B cell (primary cell): ENCODE measurements at regions of chr15 and their contacts with region 1.

Region 1: GRCh38 chr15:38690689-38691332 is 126.2 kb upstream of the RASGRP1 start:
- DNase-seq: peak; percentile 82
- ATAC-seq: peak; percentile 86
- H3K4me3 ChIP-seq: no peak overlapping the region
- H3K4me3 Mint-ChIP-seq: no peak overlapping the region
- H3K27ac ChIP-seq: no peak overlapping the region
- H3K27ac Mint-ChIP-seq: no peak overlapping the region
- H3K4me1 ChIP-seq: peaks cover 0 to 3% of the 10 kb centered on the region in 2 donors
- H3K4me1 Mint-ChIP-seq: peaks cover 12% of the 10 kb centered on the region
- H3K27me3 ChIP-seq: no peaks in the 10 kb centered on the region
- H3K27me3 Mint-ChIP-seq: no peaks in the 10 kb centered on the region
- CTCF ChIP-seq: peak; percentile 94

Region 2: DNA sequence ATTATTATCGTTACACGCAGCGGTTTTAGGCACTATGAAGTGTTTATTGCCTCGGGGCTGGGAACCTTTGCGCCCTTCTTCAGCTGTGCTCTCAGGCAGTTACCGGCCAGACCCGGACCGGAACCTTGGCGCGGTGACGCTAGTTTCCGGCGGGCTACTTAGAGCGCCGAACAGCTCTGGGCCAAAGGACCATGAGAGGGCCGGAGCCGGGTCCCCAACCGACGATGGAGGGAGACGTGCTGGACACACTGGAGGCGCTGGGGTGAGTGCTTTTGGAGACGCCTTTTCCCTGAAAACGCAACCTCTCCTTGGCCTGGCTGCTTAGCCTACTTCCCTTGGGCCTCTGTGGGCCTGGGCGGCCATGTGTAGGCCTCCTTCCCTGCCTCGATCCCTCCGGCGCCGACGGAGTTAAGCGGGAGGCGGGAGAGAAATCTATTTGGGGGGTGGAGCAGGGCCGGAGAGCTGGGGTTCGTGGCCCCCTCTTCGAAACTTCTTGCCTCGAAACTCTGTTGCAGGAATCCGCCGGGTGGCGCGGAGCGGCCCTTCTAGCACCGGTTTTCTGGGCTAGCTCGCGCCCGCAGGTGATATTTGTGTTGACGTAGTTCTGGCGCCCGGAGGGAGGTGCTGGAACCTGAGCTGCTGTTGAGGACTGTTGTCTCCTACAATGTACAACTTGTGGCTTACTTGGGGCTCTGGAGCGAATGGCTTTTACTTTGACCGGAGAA is 236.7 kb before region 1 on chr15 and contains the start of gene FAM98B:
- CTCF ChIA-PET with region 1: interaction called, 50 read pairs
- POLR2A ChIA-PET with region 1: no interaction called
- intact Hi-C with region 1: no loop called
- DNase-seq: peak; percentile 91
- ATAC-seq: peak; percentile 86
- H3K4me3 ChIP-seq: peak within 1 kb of the TSS; percentile 69 to 94 (median 86)
- H3K4me3 Mint-ChIP-seq: peak within 1 kb of the TSS; percentile 99
- H3K27ac ChIP-seq: peak within 1 kb of the TSS; percentile 87 to 89
- H3K27ac Mint-ChIP-seq: peak within 1 kb of the TSS; percentile 97
- H3K4me1 ChIP-seq: peaks cover 9% of the 10 kb centered on the region in 2 donors
- H3K4me1 Mint-ChIP-seq: peaks cover 27% of the 10 kb centered on the region
- H3K27me3 ChIP-seq: no peaks in the 10 kb centered on the region
- H3K27me3 Mint-ChIP-seq: peaks cover 10% of the 10 kb centered on the region
- CTCF ChIP-seq: peak; percentile 12
- total RNA-seq, gene FAM98B: 16.6 and 21.5 TPM in 2 replicates

Region 3: DNA sequence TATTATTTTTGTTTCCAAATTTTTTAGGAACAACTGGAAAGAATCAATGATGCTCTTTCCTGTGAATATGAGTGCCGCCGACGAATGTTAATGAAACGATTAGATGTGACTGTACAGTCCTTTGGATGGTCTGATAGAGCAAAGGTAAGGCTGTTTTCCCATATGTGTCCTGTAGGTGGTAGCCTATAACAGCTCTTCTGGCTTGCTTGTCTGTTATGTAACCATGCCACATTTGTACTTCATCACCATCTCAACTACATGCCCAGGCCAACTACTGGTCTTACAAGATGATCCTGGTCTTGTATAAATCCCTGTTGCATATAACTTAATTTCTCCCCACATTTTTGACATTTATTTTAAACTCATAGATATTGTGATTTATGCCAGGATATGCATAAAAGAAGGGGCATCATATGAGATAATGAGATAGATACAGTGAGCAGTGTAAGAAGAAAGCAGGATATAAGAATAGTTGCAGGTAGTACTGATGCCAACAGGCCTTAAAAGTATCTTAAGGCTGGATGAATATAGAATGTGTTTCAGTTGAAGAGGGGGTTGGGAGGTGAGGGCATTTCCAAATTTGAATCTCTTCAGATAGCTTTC is 216.6 kb before region 1 on chr15:
- CTCF ChIA-PET with region 1: interaction called, 145 read pairs
- POLR2A ChIA-PET with region 1: no interaction called
- intact Hi-C with region 1: loop called (anchors 1 kb)
- DNase-seq: peak; percentile 73
- ATAC-seq: peak; percentile 99
- H3K4me3 ChIP-seq: no peak overlapping the region
- H3K4me3 Mint-ChIP-seq: no peak overlapping the region
- H3K27ac ChIP-seq: no peak overlapping the region
- H3K27ac Mint-ChIP-seq: no peak overlapping the region
- H3K4me1 ChIP-seq: no peaks in the 10 kb centered on the region
- H3K4me1 Mint-ChIP-seq: peaks cover 2% of the 10 kb centered on the region
- H3K27me3 ChIP-seq: no peaks in the 10 kb centered on the region
- H3K27me3 Mint-ChIP-seq: no peaks in the 10 kb centered on the region
- CTCF ChIP-seq: peak; percentile 89

Region 4: DNA sequence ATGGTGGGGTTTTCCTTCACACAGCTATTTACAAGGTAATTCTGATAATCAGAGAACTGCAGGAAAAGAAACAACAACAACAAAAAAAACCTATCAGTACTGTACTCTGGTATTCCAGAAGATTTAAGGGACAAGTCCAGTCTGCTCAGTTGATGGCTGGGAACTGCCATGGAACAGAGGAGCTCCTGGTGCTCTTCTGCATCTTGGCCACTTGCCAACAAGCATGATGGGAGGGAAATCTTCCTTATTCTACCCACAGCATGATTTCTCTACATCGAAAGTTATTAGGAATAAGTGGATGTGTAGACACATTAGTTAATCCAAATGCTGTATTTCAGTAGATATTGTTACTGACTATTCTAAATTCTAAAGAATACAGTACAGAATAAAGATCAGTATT is 177.9 kb before region 1 on chr15:
- CTCF ChIA-PET with region 1: interaction called, 14 read pairs
- POLR2A ChIA-PET with region 1: no interaction called
- intact Hi-C with region 1: no loop called
- DNase-seq: no peak
- ATAC-seq: no peak
- H3K4me3 ChIP-seq: no peak overlapping the region
- H3K4me3 Mint-ChIP-seq: no peak overlapping the region
- H3K27ac ChIP-seq: no peak overlapping the region
- H3K27ac Mint-ChIP-seq: no peak overlapping the region
- H3K4me1 ChIP-seq: peaks cover 3 to 9% of the 10 kb centered on the region in 2 donors
- H3K4me1 Mint-ChIP-seq: peaks cover 14% of the 10 kb centered on the region
- H3K27me3 ChIP-seq: no peaks in the 10 kb centered on the region
- H3K27me3 Mint-ChIP-seq: no peaks in the 10 kb centered on the region
- CTCF ChIP-seq: no peak

Region 5: DNA sequence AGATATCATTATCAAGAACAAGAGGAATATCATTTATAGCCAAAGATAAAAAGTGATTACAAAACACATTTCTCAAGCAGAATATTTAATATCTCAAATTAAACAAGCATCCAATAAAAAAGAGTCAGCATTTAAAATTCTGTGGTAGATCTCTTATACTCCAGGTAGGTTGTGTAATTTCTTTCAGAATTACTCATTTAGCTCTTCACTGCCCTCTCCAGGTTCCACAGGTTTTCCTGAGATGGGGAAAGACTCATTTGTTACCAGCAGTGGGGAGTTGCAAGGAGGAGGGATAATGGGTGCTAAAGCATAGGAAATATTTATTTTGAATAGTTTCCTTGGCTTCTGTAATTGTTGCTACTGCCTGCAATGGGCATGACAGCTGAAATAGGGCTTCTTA is 43.1 kb before region 1 on chr15:
- CTCF ChIA-PET with region 1: interaction called, 11 read pairs
- POLR2A ChIA-PET with region 1: no interaction called
- intact Hi-C with region 1: no loop called
- DNase-seq: no peak
- ATAC-seq: no peak
- H3K4me3 ChIP-seq: no peak overlapping the region
- H3K4me3 Mint-ChIP-seq: no peak overlapping the region
- H3K27ac ChIP-seq: no peak overlapping the region
- H3K27ac Mint-ChIP-seq: no peak overlapping the region
- H3K4me1 ChIP-seq: peaks cover 39 to 40% of the 10 kb centered on the region in 2 donors
- H3K4me1 Mint-ChIP-seq: peaks cover 60% of the 10 kb centered on the region
- H3K27me3 ChIP-seq: no peaks in the 10 kb centered on the region
- H3K27me3 Mint-ChIP-seq: no peaks in the 10 kb centered on the region
- CTCF ChIP-seq: no peak